Activated T-helper 2 cell treated with anti-CD3 and anti-CD28 coated beads, Interferon-gamma antibody, Interleukin-2, Interleukin-4, amounts not matched to agents 10 μg/mL and 5 μg/mL and 100 μg/mL, durations not matched to agents 14 hours and 24 hours and 36 hours (primary cell): ENCODE measurements at regions of chr17 and their contacts with region 1.

Region 1: DNA sequence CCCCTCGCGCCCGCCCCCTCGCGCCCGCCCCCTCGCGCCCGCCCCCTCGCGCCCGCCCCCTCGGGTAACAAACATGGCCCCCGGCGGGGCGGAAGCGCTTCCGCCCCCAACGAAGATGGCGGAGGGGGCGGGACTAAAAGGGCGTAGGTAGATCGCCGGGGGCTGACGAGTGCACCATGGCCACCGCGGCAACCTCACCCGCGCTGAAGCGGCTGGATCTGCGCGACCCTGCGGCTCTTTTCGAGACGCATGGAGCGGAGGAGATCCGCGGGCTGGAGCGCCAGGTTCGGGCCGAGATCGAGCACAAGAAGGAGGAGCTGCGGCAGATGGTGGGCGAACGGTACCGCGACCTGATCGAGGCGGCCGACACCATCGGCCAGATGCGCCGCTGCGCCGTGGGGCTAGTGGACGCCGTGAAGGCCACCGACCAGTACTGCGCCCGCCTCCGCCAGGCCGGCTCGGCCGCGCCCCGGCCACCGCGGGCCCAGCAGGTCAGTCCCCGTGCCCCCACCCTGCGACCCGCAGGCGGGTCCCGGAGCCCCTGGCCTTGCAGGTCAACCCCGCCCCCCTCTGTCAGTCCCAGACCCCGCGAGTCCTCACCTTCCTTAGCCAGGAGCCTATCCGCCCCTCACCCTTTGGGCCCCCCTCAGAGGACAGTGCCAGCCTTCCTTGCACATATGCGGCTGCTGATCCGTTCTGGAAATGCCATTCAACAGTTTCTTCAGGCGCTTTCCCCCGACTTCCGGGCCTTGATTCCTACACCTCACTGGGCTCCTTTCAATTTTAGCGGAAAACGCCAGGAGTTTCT is at the start of gene COG1:
- DNase-seq: peak; percentile 56
- H3K4me3 Mint-ChIP-seq: peak within 1 kb of the TSS; percentile 93
- H3K27ac Mint-ChIP-seq: peak within 1 kb of the TSS; percentile 94
- H3K4me1 Mint-ChIP-seq: peaks cover 15% of the 10 kb centered on the region
- H3K27me3 Mint-ChIP-seq: no peaks in the 10 kb centered on the region
- total RNA-seq, gene COG1: 31.4 and 31.5 TPM in 2 replicates

Region 2: GRCh38 chr17:72592242-72592966 is 600.7 kb before region 1 on chr17:
- intact Hi-C with region 1: loop called (anchors 2 kb)
- DNase-seq: peak; percentile 58
- H3K4me3 Mint-ChIP-seq: peak overlapping the region; percentile 80
- H3K27ac Mint-ChIP-seq: no peak overlapping the region
- H3K4me1 Mint-ChIP-seq: peaks cover 20% of the 10 kb centered on the region
- H3K27me3 Mint-ChIP-seq: peaks cover 59% of the 10 kb centered on the region

Region 3: GRCh38 chr17:73210002-73210678 is 17.0 kb after region 1 on chr17:
- intact Hi-C with region 1: loop called (anchors 2 kb)
- DNase-seq: no peak
- H3K4me3 Mint-ChIP-seq: no peak overlapping the region
- H3K27ac Mint-ChIP-seq: peak overlapping the region; percentile 42
- H3K4me1 Mint-ChIP-seq: peaks cover 26% of the 10 kb centered on the region
- H3K27me3 Mint-ChIP-seq: no peaks in the 10 kb centered on the region

Region 4: GRCh38 chr17:73226556-73227172 is 33.6 kb after region 1 on chr17:
- intact Hi-C with region 1: loop called (anchors 1 kb)
- DNase-seq: no peak
- H3K4me3 Mint-ChIP-seq: peak overlapping the region; percentile 47
- H3K27ac Mint-ChIP-seq: peak overlapping the region; percentile 65
- H3K4me1 Mint-ChIP-seq: peaks cover 59% of the 10 kb centered on the region
- H3K27me3 Mint-ChIP-seq: no peaks in the 10 kb centered on the region

Region 5: GRCh38 chr17:73231841-73232586 is 38.9 kb after region 1 on chr17:
- intact Hi-C with region 1: loop called (anchors 1 kb)
- DNase-seq: peak; percentile 93
- H3K4me3 Mint-ChIP-seq: peak overlapping the region; percentile 87
- H3K27ac Mint-ChIP-seq: peak overlapping the region; percentile 93
- H3K4me1 Mint-ChIP-seq: peaks cover 52% of the 10 kb centered on the region
- H3K27me3 Mint-ChIP-seq: no peaks in the 10 kb centered on the region

Region 6: DNA sequence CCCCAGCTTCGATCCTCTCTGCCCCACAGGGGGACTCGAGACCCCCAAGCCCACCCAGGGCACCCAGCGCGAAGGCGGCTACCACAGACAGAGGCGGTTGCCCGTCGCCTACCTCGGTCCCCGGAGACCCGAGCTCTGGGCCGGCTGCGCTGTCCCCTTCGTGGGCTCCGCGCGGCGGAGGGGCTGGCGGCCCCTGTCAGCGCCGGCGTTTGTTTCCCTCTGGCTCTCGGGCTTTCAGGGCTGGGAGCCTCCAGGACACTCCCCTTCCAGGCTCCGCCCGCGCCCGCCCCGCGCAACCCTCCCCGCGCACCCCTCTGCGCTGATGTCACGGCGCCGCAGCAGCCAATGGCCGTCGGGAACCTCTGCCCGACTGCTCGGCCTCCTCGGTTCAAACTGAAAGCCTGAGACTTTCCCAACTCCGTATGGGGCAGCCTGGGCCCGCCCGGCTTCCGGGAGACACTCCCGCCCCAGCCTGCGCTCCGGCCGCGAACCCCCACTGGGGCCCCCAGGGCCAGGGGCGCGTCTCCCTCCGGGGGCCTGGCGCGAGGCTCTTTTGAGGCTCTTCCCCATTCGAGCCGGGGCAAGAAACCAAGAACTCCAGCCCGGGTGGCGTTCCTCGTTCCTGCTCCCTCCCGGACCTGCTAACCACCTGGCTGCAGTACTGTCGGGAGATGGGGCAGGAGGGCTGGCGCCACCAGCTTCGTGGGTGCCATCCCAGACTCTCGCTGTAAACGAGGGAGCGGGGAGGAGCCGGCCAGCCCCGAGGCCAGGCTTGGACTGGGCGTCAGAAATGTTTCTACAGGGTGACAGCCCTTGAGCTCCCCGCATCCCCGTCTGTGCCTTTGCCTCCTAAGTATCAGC is 118.9 kb after region 1 on chr17 and contains the start of gene CDC42EP4:
- intact Hi-C with region 1: loop called (anchors 5 kb)
- DNase-seq: peak; percentile 86
- H3K4me3 Mint-ChIP-seq: peak within 1 kb of the TSS; percentile 82
- H3K27ac Mint-ChIP-seq: no peak within 1 kb of the TSS
- H3K4me1 Mint-ChIP-seq: peaks cover 6% of the 10 kb centered on the region
- H3K27me3 Mint-ChIP-seq: peaks cover 17% of the 10 kb centered on the region
- total RNA-seq, gene CDC42EP4: 1.6 and 2.8 TPM in 2 replicates

Region 7: GRCh38 chr17:73371285-73371684 is 178.2 kb after region 1 on chr17:
- intact Hi-C with region 1: loop called (anchors 1 kb)
- DNase-seq: no peak
- H3K4me3 Mint-ChIP-seq: no peak overlapping the region
- H3K27ac Mint-ChIP-seq: no peak overlapping the region
- H3K4me1 Mint-ChIP-seq: no peaks in the 10 kb centered on the region
- H3K27me3 Mint-ChIP-seq: peaks cover 9% of the 10 kb centered on the region